Activated CD8-positive, alpha-beta T cell treated with anti-CD3 and anti-CD28 coated beads, Interleukin-2, amount 10 ng/mL, durations not matched to agents 7 days and 5 days (primary cell): ENCODE measurements at regions of chr19 and their contacts with region 1.

Region 1: GRCh38 chr19:47112997-47113849 is at the start of gene ZC3H4:
- DNase-seq: peak; percentile 100
- ATAC-seq: peak; percentile 86
- H3K4me3 Mint-ChIP-seq: peak within 1 kb of the TSS; percentile 95
- H3K27ac Mint-ChIP-seq: peak within 1 kb of the TSS; percentile 100
- H3K4me1 Mint-ChIP-seq: peaks cover 29% of the 10 kb centered on the region
- H3K27me3 Mint-ChIP-seq: no peaks in the 10 kb centered on the region
- total RNA-seq, gene ZC3H4: 102 TPM

Region 2: DNA sequence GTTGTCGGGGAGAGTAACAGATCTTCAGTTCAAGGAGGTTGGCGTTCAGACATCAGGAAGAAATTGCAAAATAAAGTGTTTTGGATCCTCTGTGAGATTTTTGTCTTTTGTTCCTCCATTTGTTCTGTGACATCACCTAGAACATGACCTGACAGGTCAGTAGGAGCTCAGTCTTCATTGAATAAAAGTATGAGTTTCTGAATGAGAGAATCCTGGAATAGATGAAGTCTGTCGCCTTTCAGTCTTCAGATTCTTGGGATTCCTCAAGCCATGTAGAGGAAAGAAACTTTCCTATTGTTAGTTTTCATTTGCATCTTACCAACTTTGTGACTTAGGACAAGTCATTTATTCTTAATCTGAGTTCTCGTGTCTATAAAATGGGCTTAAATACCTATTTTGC is 238.0 kb before region 1 on chr19:
- CTCF ChIA-PET with region 1: no interaction called
- POLR2A ChIA-PET with region 1: no interaction called
- DNase-seq: no peak
- ATAC-seq: no peak
- H3K4me3 Mint-ChIP-seq: no peak overlapping the region
- H3K27ac Mint-ChIP-seq: no peak overlapping the region
- H3K4me1 Mint-ChIP-seq: peaks cover 5% of the 10 kb centered on the region
- H3K27me3 Mint-ChIP-seq: no peaks in the 10 kb centered on the region

Region 3: GRCh38 chr19:46932346-46932745 is 180.9 kb before region 1 on chr19:
- CTCF ChIA-PET with region 1: no interaction called
- POLR2A ChIA-PET with region 1: no interaction called
- DNase-seq: no peak
- ATAC-seq: no peak
- H3K4me3 Mint-ChIP-seq: no peak overlapping the region
- H3K27ac Mint-ChIP-seq: no peak overlapping the region
- H3K4me1 Mint-ChIP-seq: peaks cover 46% of the 10 kb centered on the region
- H3K27me3 Mint-ChIP-seq: no peaks in the 10 kb centered on the region

Region 4: GRCh38 chr19:47035127-47036096 is 77.8 kb before region 1 on chr19:
- CTCF ChIA-PET with region 1: interaction called, 13 read pairs
- POLR2A ChIA-PET with region 1: interaction called, 6 read pairs
- DNase-seq: peak; percentile 96
- ATAC-seq: peak; percentile 95
- H3K4me3 Mint-ChIP-seq: peak overlapping the region; percentile 87
- H3K27ac Mint-ChIP-seq: peak overlapping the region; percentile 80
- H3K4me1 Mint-ChIP-seq: peaks cover 21% of the 10 kb centered on the region
- H3K27me3 Mint-ChIP-seq: peaks cover 16% of the 10 kb centered on the region

Region 5: DNA sequence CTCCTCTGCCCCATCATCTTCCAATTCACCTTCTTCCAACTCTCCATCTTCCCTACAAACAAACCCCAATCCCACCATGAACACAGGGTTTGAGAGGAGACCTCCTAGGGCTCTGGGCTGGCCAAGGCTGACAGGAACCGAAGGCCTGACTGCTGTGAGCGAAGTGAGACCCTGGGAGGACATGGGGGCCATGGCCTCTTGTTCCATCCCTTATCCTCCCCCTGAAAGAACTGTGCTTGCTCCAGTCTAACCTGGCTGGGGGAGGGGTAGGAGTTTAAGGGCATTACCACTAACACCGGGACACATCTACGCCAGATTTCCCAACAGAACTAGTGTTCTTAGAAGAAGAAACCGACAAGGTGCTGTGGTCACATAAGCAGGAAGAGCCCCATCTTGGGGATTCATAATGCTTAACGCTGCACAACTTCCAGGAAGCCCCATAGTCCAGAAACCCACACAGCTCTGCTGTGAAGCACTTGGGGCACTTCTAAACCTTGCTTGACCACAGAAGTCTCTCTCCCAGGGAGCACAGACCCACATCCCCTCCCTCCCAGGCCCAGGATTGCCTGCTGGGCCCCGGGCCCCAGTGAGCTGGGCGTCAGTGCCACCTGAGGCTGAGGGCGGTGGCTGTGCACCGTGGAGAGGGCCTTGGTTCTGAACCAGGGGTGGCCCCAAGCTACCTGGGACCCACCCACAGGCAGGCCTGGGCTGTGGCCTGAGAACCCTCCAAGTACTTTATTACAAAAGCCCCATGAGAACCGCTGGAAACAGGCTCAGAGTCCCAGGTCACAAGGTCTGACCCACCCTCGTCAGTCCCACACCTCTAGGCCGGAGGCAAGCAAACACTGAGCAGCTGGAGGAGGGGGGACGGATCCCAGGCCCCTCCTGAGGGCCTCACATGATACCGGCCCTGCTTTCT is 18.4 kb before region 1 on chr19:
- CTCF ChIA-PET with region 1: interaction called, 19 read pairs
- POLR2A ChIA-PET with region 1: interaction called, 256 read pairs
- DNase-seq: peak; percentile 64
- ATAC-seq: peak; percentile 82
- H3K4me3 Mint-ChIP-seq: peak overlapping the region; percentile 78
- H3K27ac Mint-ChIP-seq: peak overlapping the region; percentile 87
- H3K4me1 Mint-ChIP-seq: peaks cover 79% of the 10 kb centered on the region
- H3K27me3 Mint-ChIP-seq: no peaks in the 10 kb centered on the region

Region 6: DNA sequence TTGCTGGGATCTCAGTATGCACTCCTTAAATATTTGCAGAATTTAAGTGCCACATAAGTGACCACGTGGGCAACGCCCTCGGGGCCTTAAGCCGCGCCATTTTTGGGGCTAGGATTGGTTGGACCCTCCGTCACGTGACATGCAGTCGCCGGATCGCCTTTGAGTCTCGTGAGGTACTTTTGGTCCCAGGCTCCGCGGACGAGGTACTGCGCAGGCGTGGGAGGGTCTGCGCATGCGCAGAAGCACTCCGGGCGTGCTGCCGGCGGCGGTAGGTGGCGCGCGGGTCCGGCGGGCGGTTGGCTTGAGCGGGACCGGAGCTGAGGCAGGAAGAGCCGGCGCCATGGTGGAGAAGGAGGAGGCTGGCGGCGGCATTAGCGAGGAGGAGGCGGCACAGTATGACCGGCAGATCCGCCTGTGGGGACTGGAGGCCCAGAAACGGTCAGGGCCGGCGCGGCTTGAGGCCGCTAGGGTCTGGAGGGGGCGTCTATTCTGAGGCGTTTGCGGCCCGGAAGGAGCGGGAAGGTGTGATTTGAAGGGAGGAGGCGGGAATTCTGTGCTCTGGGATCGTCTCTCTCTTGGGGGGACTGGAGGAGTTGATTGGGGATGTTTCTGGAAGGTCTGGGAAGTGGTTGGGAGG is 17.5 kb after region 1 on chr19 and contains the start of gene SAE1:
- CTCF ChIA-PET with region 1: interaction called, 23 read pairs
- POLR2A ChIA-PET with region 1: interaction called, 41 read pairs
- DNase-seq: peak; percentile 94
- ATAC-seq: peak; percentile 91
- H3K4me3 Mint-ChIP-seq: peak within 1 kb of the TSS; percentile 99
- H3K27ac Mint-ChIP-seq: peak within 1 kb of the TSS; percentile 98
- H3K4me1 Mint-ChIP-seq: peaks cover 51% of the 10 kb centered on the region
- H3K27me3 Mint-ChIP-seq: no peaks in the 10 kb centered on the region
- total RNA-seq, gene SAE1: 165 to 175 TPM

Region 7: DNA sequence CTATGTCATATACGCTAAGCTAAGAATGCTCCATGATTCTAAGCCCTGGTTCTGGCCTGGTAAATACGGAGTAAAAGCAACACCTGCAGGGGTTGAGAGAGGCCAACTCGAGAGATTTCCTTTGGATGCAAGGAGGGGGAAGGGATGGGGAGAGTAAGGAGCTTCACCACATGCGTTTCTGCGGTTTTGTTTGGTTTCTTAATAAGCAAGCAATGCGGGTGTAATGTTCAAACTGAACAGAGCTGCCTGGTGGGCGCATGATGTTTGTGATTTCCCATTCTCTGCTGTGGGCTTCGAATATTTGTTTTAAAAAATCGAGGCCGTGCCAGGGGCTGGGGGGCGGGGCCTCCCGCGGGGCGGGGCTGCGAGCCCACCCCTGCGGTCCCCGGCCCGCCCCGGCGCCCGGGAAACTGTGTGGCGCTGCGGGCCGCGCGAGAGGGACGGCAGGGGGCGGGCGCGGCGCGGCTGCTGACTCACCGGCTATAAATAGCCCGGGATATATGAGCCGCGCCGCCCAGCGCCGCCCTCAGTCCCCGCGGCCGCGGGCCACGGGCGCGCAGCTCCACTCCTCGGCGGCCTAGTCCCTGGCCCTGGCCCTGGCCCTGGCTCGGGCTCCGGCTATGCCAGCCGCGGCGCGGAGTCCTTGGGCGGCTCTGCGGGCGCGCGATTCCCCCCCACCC is 112.7 kb after region 1 on chr19:
- CTCF ChIA-PET with region 1: no interaction called
- POLR2A ChIA-PET with region 1: interaction called, 10 read pairs
- DNase-seq: peak; percentile 88
- ATAC-seq: peak; percentile 63
- H3K4me3 Mint-ChIP-seq: peak overlapping the region; percentile 37
- H3K27ac Mint-ChIP-seq: peak overlapping the region; percentile 90
- H3K4me1 Mint-ChIP-seq: peaks cover 20% of the 10 kb centered on the region
- H3K27me3 Mint-ChIP-seq: no peaks in the 10 kb centered on the region